ENCODE measurements at regions of chr10 and their contacts with region 1.

Region 1: DNA sequence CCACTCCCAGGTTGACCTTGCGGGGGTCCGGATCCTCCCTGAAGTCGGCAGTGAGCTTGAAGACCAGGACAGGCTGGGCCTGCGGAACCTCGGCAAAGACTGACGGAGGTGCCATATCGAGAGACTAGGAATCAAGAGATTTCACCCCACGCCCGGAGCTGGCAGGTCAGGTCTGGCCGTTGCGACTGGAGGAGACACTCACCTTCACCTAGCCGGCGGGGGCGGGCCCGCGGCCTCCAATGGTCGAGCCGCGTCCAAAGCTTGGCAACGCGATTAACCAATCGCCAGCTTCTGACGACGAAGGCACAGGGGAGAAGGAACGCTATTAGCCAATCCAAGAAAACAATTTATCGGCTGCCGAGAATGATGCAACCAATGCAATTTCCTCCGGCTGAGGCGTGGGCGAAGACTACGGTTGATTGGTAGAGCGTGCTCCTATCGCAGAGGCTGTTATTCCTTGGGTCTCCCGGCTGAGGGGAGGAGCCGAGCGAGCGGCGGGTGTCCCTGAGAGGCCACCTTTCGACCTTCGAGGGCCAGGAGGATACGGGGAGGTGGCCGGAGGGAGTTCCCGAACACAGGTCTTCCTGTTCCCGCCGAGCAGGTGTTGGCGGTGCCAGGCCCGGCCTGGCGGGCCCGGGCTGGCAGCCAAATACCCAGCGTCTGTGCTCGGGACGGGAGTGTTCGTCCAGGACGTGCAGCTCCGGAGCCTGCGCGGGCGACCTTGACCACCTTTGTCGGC is at the start of gene GOT1:
- DNase-seq: peak; percentile 97
- H3K4me3 ChIP-seq: peak within 1 kb of the TSS; percentile 66 to 92 (median 78)
- H3K27ac ChIP-seq: peak within 1 kb of the TSS; percentile 91 to 99 (median 98)
- H3K4me1 ChIP-seq: peaks cover 12 to 58% (median 20%) of the 10 kb centered on the region in 4 donors
- H3K27me3 ChIP-seq: no peaks in the 10 kb centered on the region
- CTCF ChIP-seq: no peak
- EP300 ChIP-seq: no peak
- POLR2A ChIP-seq: peak; percentile 95
- total RNA-seq, gene GOT1: 54.5 to 94.3 (median 82.3) TPM

Region 2: GRCh38 chr10:98619446-98619845 is 811.2 kb before region 1 on chr10:
- in situ Hi-C with region 1: no loop called
- intact Hi-C with region 1: no loop called
- DNase-seq: no peak
- H3K4me3 ChIP-seq: no peak overlapping the region
- H3K27ac ChIP-seq: no peak overlapping the region
- H3K4me1 ChIP-seq: peaks cover 0 to 9% (median 4%) of the 10 kb centered on the region in 4 donors
- H3K27me3 ChIP-seq: no peaks in the 10 kb centered on the region
- CTCF ChIP-seq: no peak
- EP300 ChIP-seq: no peak
- POLR2A ChIP-seq: no peak

Region 3: GRCh38 chr10:99084161-99084560 is 346.5 kb before region 1 on chr10:
- in situ Hi-C with region 1: no loop called
- intact Hi-C with region 1: no loop called
- DNase-seq: no peak
- H3K4me3 ChIP-seq: no peak overlapping the region
- H3K27ac ChIP-seq: no peak overlapping the region
- H3K4me1 ChIP-seq: no peaks in the 10 kb centered on the region
- H3K27me3 ChIP-seq: no peaks in the 10 kb centered on the region
- CTCF ChIP-seq: no peak
- EP300 ChIP-seq: no peak
- POLR2A ChIP-seq: no peak

Region 4: GRCh38 chr10:99520040-99520846 is 89.6 kb after region 1 on chr10:
- in situ Hi-C with region 1: loop called in 1 of 4 experiments (anchors 10 kb)
- intact Hi-C with region 1: no loop called
- DNase-seq: peak; percentile 15
- H3K4me3 ChIP-seq: peak overlapping the region in 3 of 4 donors; percentile 8 to 44 (median 27)
- H3K27ac ChIP-seq: peak overlapping the region; percentile 86 to 94 (median 90)
- H3K4me1 ChIP-seq: peaks cover 4 to 58% (median 29%) of the 10 kb centered on the region in 4 donors
- H3K27me3 ChIP-seq: peaks cover 77% of the 10 kb centered on the region
- CTCF ChIP-seq: no peak
- EP300 ChIP-seq: no peak
- POLR2A ChIP-seq: no peak

Region 5: GRCh38 chr10:99534939-99535763 is 104.5 kb after region 1 on chr10:
- in situ Hi-C with region 1: no loop called
- intact Hi-C with region 1: loop called (anchors 5 kb)
- DNase-seq: peak; percentile 32
- H3K4me3 ChIP-seq: peak overlapping the region; percentile 46 to 55 (median 49)
- H3K27ac ChIP-seq: peak overlapping the region; percentile 86 to 94 (median 90)
- H3K4me1 ChIP-seq: peaks cover under 1 to 49% (median 34%) of the 10 kb centered on the region in 4 donors
- H3K27me3 ChIP-seq: peaks cover 100% of the 10 kb centered on the region
- CTCF ChIP-seq: no peak
- EP300 ChIP-seq: no peak
- POLR2A ChIP-seq: no peak